ENCODE measurements at regions of chr3 and their contacts with region 1.

Region 1: DNA sequence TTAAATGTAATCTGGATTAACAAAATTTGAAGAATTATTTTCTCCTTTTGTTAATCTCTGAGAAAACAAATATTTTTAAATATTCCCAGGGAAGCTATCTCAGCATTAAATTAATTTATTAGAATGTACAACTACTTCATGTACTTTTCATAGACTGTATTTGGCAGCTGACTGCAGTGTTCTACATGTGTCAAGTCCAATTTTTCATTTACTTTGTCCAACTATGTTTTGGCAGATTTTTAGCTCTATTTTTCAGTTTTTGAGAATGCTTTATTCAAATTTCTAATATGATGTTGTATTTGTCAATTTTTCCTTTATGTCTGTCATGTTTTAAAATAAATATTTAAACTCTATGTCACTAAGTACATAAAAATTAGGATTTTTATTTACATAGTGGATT is 925.1 kb downstream of the OTOL1 start:
- DNase-seq: no peak
- ATAC-seq: no peak
- H3K4me3 ChIP-seq: no peak overlapping the region
- H3K27ac ChIP-seq: no peak overlapping the region
- H3K4me1 ChIP-seq: no peaks in the 10 kb centered on the region
- H3K27me3 ChIP-seq: no peaks in the 10 kb centered on the region
- CTCF ChIP-seq: no peak

Region 2: GRCh38 chr3:162370141-162370540 is 51.6 kb before region 1 on chr3:
- intact Hi-C with region 1: loop called in 1 of 10 experiments (anchors 10 kb)
- DNase-seq: peak in 1 of 2 donors; percentile 7
- ATAC-seq: peak in 4 of 8 donors; percentile 65 to 86 (median 76)
- H3K4me3 ChIP-seq: no peak overlapping the region
- H3K27ac ChIP-seq: no peak overlapping the region
- H3K4me1 ChIP-seq: peaks cover 0 to 18% (median 0%) of the 10 kb centered on the region in 9 donors
- H3K27me3 ChIP-seq: no peaks in the 10 kb centered on the region
- CTCF ChIP-seq: no peak

Measured in heart right ventricle (tissue), 16 donors.